Dorsolateral prefrontal cortex (tissue), 120 donors: ENCODE measurements at regions of chr16 and their contacts with region 1.

Region 1: DNA sequence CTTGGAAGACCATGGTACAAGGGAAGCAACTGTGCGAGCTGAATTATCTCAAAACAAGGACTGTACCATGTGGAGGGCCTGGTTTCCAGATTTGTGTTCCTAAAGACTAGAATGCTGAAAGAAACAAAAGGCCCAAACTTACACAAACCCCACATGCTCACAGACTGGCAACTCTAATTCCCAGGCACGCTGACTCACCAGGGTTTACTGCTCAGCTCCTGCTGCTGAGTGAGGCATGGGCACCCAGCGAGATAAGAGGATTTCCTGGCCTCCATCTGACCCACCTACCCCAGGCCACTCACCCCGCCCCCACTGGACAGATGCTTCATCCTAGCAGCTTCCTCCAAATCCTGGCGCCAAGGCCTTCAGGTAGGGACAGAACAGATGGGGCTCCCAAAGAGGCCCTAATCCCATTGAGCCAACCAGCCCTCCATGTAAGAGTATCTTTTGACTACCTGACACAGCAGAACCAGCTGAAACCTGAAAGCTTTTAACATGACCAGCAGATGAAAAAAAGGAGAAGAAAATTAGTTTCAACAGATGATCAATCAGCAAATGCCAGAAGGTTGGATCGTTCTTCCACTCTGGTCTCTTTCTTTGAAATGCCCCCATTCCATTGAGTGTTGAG is 33.9 kb downstream of the DCUN1D3 start:
- DNase-seq: peak in 5 of 10 donors; percentile 21 to 58 (median 43)
- H3K4me3 ChIP-seq: no peak overlapping the region
- H3K27ac ChIP-seq: peak overlapping the region in 32 of 59 donors; percentile 3 to 77 (median 28)
- H3K27me3 ChIP-seq: no peaks in the 10 kb centered on the region
- CTCF ChIP-seq: no peak

Region 2: DNA sequence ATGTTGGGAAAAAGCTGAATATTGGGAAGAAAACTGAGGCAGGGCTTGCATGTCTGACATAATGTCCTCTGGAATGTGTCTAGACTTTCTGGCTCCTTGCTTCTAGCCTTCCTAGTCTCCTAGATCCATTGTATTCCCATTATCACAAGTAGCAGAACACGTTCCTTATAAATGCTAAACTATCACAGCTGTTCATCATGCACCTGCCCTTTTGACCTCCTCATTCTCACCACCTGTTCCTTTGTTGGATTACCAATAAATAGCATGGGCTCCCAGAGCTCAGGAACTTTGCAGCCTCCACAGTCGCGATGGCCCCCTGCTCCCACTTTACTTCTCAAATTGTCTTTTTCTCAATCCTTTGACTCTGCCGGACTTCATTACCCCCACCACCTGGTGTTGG is 218.5 kb before region 1 on chr16:
- intact Hi-C with region 1: no loop called
- DNase-seq: no peak
- H3K4me3 ChIP-seq: no peak overlapping the region
- H3K27ac ChIP-seq: no peak overlapping the region
- H3K27me3 ChIP-seq: peaks cover 0 to 3% (median 0%) of the 10 kb centered on the region in 45 donors
- CTCF ChIP-seq: no peak

Region 3: DNA sequence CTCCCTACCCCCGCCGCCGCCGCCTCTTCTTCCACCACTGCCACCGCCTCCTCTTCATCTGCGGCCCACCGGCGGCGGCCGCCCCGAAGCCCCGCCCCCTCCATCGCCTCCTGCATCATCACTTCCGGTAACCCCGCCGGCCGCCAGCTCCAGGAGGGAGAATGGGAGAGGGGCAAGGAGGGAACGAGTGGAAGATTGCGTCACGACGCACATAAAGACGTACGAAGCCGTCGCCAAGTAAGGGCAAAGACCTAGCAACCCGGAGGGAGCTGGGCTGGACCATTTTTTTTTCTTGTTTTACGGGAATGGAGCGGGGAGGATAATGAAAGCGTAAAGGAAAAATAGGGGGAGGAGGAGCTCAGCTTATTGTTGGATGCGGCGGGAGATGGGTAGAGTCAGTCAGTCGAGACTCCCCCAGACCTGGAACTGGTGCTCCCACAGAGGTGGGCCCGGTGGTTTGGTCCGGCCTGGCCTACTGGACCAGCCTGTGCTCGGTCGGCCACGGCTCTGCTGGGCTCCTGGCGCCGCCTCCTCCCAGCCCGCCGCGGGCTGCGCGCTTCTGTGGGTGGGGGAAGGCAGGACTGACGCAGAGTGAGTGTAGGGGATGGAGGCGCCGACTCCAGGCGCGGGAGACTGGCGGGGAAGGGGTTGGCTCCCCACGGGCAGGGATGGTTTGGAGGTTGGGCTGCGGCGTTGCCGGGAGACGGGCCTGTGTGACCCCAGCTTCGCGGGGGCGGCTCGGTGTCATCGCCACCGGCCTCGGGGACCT is 34.2 kb after region 1 on chr16 and contains the starts of genes DCUN1D3 and LYRM1:
- intact Hi-C with region 1: loop called in 1 of 2 experiments (anchors 2 kb)
- DNase-seq: peak; percentile 88 to 98 (median 96)
- H3K4me3 ChIP-seq: peak within 1 kb of the TSS; percentile 70 to 98 (median 89)
- H3K27ac ChIP-seq: peak within 1 kb of the TSS; percentile 82 to 99 (median 97)
- H3K27me3 ChIP-seq: no peaks in the 10 kb centered on the region
- CTCF ChIP-seq: peak in 3 of 56 donors; percentile 7 to 9 (median 9)
- total RNA-seq, gene DCUN1D3: 9.7 to 23.3 (median 14.8) TPM
- total RNA-seq, gene LYRM1: 15.4 to 38.4 (median 24.8) TPM

Region 4: GRCh38 chr16:21069986-21070385 is 203.7 kb after region 1 on chr16:
- intact Hi-C with region 1: no loop called
- DNase-seq: no peak
- H3K4me3 ChIP-seq: no peak overlapping the region
- H3K27ac ChIP-seq: no peak overlapping the region
- H3K27me3 ChIP-seq: peaks cover 0 to 8% (median 0%) of the 10 kb centered on the region in 45 donors
- CTCF ChIP-seq: no peak

Region 5: DNA sequence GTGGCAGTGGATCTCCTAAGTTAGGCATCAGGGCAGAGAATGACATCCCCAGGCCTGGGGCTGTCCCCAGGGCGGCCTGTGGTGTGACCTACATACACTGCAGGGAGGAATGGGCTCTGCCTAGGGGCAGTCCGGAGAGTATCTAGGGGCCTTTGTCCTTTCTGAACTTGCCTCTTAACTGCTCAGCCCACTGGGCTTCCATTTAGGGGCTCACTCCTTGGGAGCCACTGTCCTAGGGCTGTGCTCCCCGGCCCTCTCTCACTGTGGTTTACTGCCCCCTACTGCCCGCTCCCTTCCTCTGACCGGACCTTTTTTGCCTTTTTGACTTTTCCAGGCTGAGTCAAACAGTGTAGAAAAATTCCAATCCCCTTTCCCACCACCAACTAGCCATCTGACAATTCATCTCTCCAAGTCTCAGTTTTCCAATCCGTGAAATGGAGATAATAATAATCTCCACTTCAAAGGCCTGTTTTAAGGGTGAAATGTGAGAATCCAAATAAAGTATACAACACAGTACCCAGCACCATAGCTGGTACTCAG is 217.5 kb after region 1 on chr16:
- intact Hi-C with region 1: loop called in 1 of 2 experiments (anchors 5 kb)
- DNase-seq: peak in 8 of 10 donors; percentile 26 to 63 (median 36)
- H3K4me3 ChIP-seq: no peak overlapping the region
- H3K27ac ChIP-seq: no peak overlapping the region
- H3K27me3 ChIP-seq: no peaks in the 10 kb centered on the region
- CTCF ChIP-seq: peak; percentile 41 to 81 (median 71)